ENCODE measurements at regions of chr12 and their contacts with region 1.

Region 1: DNA sequence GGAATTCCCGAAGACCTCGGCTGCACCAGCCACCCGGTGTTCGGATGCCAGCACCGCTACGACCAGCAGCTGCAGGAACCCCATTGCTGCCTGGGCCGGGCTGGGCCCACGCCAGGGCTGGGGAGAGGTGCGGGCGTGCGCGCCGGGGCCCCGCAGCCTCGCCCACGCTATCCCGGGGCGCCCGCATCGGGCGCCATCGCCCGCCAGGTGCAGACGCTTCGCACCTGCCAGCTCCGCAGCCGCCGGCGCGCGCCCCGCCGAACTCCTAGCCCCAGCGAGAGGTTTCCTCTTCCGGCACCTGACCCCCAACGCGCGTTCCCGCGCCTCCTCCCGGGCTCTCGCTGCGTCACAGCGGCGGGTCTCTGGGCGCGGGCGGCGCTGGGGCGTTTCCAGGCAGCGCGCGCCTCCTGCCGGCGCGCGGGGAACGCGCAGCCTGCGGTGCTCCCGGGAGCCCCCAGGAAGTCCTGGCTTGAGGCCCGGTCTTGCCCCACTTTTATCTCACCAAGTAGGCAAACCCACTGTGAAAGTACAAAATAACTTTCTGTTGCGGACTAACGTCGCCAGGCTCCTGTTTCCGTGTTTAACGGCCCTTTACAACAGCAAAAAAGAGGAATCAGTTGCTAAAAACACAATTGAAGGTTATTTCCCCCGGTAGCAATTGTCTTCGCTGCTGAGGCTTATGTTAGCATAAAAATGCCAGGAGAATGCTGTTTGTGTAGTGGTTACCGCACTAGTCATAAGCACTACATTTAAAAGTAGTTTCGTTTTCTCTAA is at the start of gene TM7SF3:
- DNase-seq: peak; percentile 97
- ATAC-seq: peak; percentile 93
- H3K4me3 ChIP-seq: peak within 1 kb of the TSS; percentile 78 to 86 (median 83)
- H3K4me3 Mint-ChIP-seq: peak within 1 kb of the TSS; percentile 96
- H3K27ac ChIP-seq: peak within 1 kb of the TSS; percentile 90 to 91
- H3K27ac Mint-ChIP-seq: peak within 1 kb of the TSS; percentile 96
- H3K4me1 ChIP-seq: peaks cover 24 to 25% of the 10 kb centered on the region in 2 donors
- H3K4me1 Mint-ChIP-seq: peaks cover 47% of the 10 kb centered on the region
- H3K27me3 ChIP-seq: no peaks in the 10 kb centered on the region
- H3K27me3 Mint-ChIP-seq: no peaks in the 10 kb centered on the region
- CTCF ChIP-seq: peak; percentile 92
- total RNA-seq, gene TM7SF3: 33.5 and 42.0 TPM in 2 replicates

Region 2: DNA sequence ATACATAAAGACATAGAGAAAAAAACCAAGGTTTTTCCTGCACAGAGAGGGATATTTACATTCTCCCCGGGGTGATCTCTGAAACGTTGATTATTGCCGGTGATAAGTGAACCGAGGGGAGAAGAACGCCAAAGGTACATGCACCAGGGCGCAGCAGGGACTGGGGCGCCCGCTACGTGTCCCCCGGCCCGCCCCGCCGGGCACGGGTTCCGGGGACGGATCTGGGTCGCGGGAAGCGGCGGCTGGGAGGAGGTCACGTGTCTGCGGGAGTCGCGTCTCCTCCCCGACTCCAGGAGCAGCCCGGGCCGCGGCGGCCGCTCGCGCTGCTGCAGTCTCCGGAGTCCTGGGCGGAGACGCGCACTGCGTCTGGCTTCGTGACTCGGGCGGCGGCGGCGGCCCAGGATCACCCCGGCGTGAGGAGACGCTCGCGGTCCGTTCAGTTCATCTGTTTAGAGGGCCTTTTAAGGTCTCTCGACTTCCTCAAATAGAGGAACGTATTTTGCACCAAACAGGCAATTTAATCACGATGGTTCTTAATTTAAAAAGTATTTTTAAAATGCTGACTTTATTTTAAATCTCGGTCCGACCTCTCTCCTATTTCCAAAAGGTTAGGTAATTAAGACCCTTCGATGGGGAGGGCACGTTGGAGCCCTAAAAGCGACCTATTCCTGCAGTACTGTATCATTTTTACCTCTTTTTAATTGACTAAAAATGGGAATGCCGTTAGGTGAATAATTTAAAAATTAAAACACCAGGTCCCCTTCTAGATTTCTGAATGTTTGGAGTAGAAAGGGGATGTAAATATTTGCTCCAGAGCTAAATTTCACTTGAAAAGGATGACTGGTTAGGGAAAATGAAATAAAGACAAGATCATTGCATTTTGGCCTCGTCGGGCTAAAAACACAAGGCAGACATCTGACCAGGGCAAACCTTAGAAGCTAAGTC is 887.7 kb before region 1 on chr12:
- CTCF ChIA-PET with region 1: no interaction called
- POLR2A ChIA-PET with region 1: no interaction called
- intact Hi-C with region 1: loop called (anchors 5 kb)
- DNase-seq: peak; percentile 88
- ATAC-seq: peak; percentile 42
- H3K4me3 ChIP-seq: peak overlapping the region; percentile 32 to 87 (median 74)
- H3K4me3 Mint-ChIP-seq: peak overlapping the region; percentile 99
- H3K27ac ChIP-seq: peak overlapping the region; percentile 67 to 87
- H3K27ac Mint-ChIP-seq: peak overlapping the region; percentile 98
- H3K4me1 ChIP-seq: peaks cover 48 to 49% of the 10 kb centered on the region in 2 donors
- H3K4me1 Mint-ChIP-seq: peaks cover 61% of the 10 kb centered on the region
- H3K27me3 ChIP-seq: peaks cover 0 to 14% (median 0%) of the 10 kb centered on the region in 4 experiments
- H3K27me3 Mint-ChIP-seq: peaks cover 4% of the 10 kb centered on the region
- CTCF ChIP-seq: peak; percentile 22

Region 3: DNA sequence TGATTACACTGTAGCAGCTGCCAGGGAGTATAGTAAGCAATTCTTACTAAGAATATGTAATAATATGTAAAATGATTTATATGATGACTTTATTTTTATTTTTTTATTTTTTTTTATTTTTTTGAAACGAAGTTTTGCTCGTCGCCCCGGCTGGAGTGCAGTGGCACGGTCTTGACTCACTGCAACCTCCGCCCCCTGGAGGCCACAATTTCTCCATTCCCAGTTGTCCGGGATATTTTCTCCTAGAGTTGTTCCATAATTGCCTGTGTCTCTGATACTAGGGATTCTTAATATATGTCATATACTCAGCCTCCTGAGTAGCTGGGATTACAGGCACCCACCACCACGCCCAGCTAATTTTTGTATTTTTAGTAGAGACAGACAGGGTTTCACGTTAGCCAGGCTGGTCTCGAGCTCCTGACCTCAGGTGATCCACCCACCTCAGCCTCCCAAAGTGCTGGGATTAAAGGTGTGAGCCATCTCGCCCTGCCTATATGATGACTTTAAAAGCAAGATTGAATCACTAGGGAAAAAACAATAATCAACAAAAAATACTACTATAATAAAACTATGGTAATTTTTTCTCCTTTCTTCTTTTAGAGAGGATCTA is 169.1 kb before region 1 on chr12:
- CTCF ChIA-PET with region 1: interaction called, 11 read pairs
- POLR2A ChIA-PET with region 1: no interaction called
- intact Hi-C with region 1: no loop called
- DNase-seq: peak; percentile 30
- ATAC-seq: no peak
- H3K4me3 ChIP-seq: no peak overlapping the region
- H3K4me3 Mint-ChIP-seq: no peak overlapping the region
- H3K27ac ChIP-seq: no peak overlapping the region
- H3K27ac Mint-ChIP-seq: no peak overlapping the region
- H3K4me1 ChIP-seq: peaks cover 12 to 15% of the 10 kb centered on the region in 2 donors
- H3K4me1 Mint-ChIP-seq: peaks cover 20% of the 10 kb centered on the region
- H3K27me3 ChIP-seq: no peaks in the 10 kb centered on the region
- H3K27me3 Mint-ChIP-seq: no peaks in the 10 kb centered on the region
- CTCF ChIP-seq: peak; percentile 53

Region 4: GRCh38 chr12:26937875-26938700 is 76.2 kb before region 1 on chr12 and contains the starts of genes FGFR1OP2 and INTS13:
- CTCF ChIA-PET with region 1: interaction called, 10 read pairs
- POLR2A ChIA-PET with region 1: no interaction called
- intact Hi-C with region 1: loop called (anchors 1 kb)
- DNase-seq: peak; percentile 97
- ATAC-seq: peak; percentile 91
- H3K4me3 ChIP-seq: peak within 1 kb of the TSS; percentile 72 to 100 (median 98)
- H3K4me3 Mint-ChIP-seq: peak within 1 kb of the TSS; percentile 99
- H3K27ac ChIP-seq: peak within 1 kb of the TSS; percentile 88 to 96
- H3K27ac Mint-ChIP-seq: peak within 1 kb of the TSS; percentile 99
- H3K4me1 ChIP-seq: peaks cover 18 to 57% of the 10 kb centered on the region in 2 donors
- H3K4me1 Mint-ChIP-seq: peaks cover 64% of the 10 kb centered on the region
- H3K27me3 ChIP-seq: no peaks in the 10 kb centered on the region
- H3K27me3 Mint-ChIP-seq: no peaks in the 10 kb centered on the region
- CTCF ChIP-seq: no peak
- total RNA-seq, gene FGFR1OP2: 64.3 and 67.3 TPM in 2 replicates
- total RNA-seq, gene INTS13: 15.6 and 16.2 TPM in 2 replicates

Region 5: GRCh38 chr12:27024291-27024690 is 10.0 kb after region 1 on chr12:
- CTCF ChIA-PET with region 1: interaction called, 29 read pairs
- POLR2A ChIA-PET with region 1: interaction called, 6 read pairs
- intact Hi-C with region 1: loop called (anchors 1 kb)
- DNase-seq: no peak
- ATAC-seq: no peak
- H3K4me3 ChIP-seq: no peak overlapping the region
- H3K4me3 Mint-ChIP-seq: peak overlapping the region; percentile 97
- H3K27ac ChIP-seq: no peak overlapping the region
- H3K27ac Mint-ChIP-seq: peak overlapping the region; percentile 53
- H3K4me1 ChIP-seq: peaks cover 14 to 24% of the 10 kb centered on the region in 2 donors
- H3K4me1 Mint-ChIP-seq: peaks cover 40% of the 10 kb centered on the region
- H3K27me3 ChIP-seq: no peaks in the 10 kb centered on the region
- H3K27me3 Mint-ChIP-seq: no peaks in the 10 kb centered on the region
- CTCF ChIP-seq: no peak

Region 6: DNA sequence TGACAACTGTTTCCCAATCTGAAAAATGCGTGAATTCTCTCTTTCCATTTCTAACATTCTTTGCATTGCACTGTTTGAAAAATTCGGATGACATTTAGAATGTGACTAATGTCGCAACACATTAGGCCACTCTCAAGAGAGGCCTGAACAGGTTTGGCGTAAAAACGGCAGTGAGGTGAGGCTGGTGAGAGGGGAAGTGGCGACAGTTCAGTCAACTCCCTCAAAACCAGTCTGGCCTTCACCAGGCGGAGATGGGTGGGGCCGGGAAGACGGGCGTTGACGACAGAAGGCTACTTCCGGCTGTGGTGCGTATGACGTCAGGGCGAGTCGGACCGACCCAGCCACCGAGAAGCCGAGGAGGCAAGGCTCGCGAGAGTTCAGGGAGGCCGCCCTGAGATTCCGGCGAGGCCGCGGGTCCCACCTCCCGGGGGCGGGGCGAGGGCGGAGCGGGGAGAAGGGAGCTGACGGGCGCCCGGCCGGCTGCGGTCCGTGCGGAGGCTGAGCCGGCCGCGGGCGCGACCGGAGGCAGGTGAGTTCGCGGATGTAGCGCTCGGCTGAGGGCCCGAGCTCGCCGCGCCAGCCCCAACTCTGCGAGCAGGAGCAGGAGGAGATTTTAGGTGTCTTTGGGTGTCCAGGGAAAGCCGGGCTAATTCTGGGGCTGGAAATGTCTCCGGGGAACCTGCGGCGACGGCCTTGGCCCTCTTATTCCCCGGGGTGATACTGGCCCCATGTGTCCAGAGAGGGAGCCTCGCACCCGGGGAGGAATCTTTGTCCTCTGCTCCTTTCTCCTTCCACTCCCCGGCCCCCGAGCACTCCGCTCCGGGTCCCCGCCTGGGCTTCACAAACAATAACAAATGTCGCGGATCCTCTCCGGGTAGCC is 229.8 kb after region 1 on chr12 and contains the start of gene STK38L:
- CTCF ChIA-PET with region 1: interaction called, 10 read pairs
- POLR2A ChIA-PET with region 1: interaction called, 6 read pairs
- intact Hi-C with region 1: loop called (anchors 2 kb)
- DNase-seq: peak; percentile 97
- ATAC-seq: peak; percentile 97
- H3K4me3 ChIP-seq: peak within 1 kb of the TSS; percentile 48 to 97 (median 88)
- H3K4me3 Mint-ChIP-seq: peak within 1 kb of the TSS; percentile 98
- H3K27ac ChIP-seq: peak within 1 kb of the TSS; percentile 66 to 89
- H3K27ac Mint-ChIP-seq: peak within 1 kb of the TSS; percentile 95
- H3K4me1 ChIP-seq: peaks cover 17 to 20% of the 10 kb centered on the region in 2 donors
- H3K4me1 Mint-ChIP-seq: peaks cover 38% of the 10 kb centered on the region
- H3K27me3 ChIP-seq: no peaks in the 10 kb centered on the region
- H3K27me3 Mint-ChIP-seq: no peaks in the 10 kb centered on the region
- CTCF ChIP-seq: no peak
- total RNA-seq, gene STK38L: 19.9 and 21.2 TPM in 2 replicates

Region 7: GRCh38 chr12:27710592-27711316 is 696.5 kb after region 1 on chr12 and contains the start of gene MRPS35:
- CTCF ChIA-PET with region 1: no interaction called
- POLR2A ChIA-PET with region 1: no interaction called
- intact Hi-C with region 1: loop called (anchors 5 kb)
- DNase-seq: peak; percentile 95
- ATAC-seq: peak; percentile 99
- H3K4me3 ChIP-seq: peak within 1 kb of the TSS; percentile 71 to 96 (median 92)
- H3K4me3 Mint-ChIP-seq: peak within 1 kb of the TSS; percentile 97
- H3K27ac ChIP-seq: peak within 1 kb of the TSS; percentile 68 to 80
- H3K27ac Mint-ChIP-seq: peak within 1 kb of the TSS; percentile 97
- H3K4me1 ChIP-seq: peaks cover 12 to 16% of the 10 kb centered on the region in 2 donors
- H3K4me1 Mint-ChIP-seq: peaks cover 31% of the 10 kb centered on the region
- H3K27me3 ChIP-seq: peaks cover 0 to 4% (median 0%) of the 10 kb centered on the region in 4 experiments
- H3K27me3 Mint-ChIP-seq: peaks cover 7% of the 10 kb centered on the region
- CTCF ChIP-seq: no peak
- total RNA-seq, gene MRPS35: 18.0 and 24.5 TPM in 2 replicates

Measured in B cell (primary cell).